Dendritic cell treated with granulocyte-macrophage colony-stimulating factor and Interleukin-4, amounts not matched to agents 40 ng/mL and 50 ng/mL, for 4 days (primary cell): ENCODE measurements at regions of chr12 and their contacts with region 1.

Region 1: GRCh38 chr12:48165094-48165981 is 8.0 kb upstream of the ASB8 start:
- H3K4me3 Mint-ChIP-seq: no peak overlapping the region
- H3K27ac Mint-ChIP-seq: no peak overlapping the region
- H3K4me1 Mint-ChIP-seq: no peaks in the 10 kb centered on the region
- H3K27me3 Mint-ChIP-seq: peaks cover 3% of the 10 kb centered on the region

Region 2: GRCh38 chr12:47963340-47964040 is 201.8 kb before region 1 on chr12 and contains the start of gene TMEM106C:
- intact Hi-C with region 1: loop called (anchors 10 kb)
- H3K4me3 Mint-ChIP-seq: peak within 1 kb of the TSS; percentile 89
- H3K27ac Mint-ChIP-seq: peak within 1 kb of the TSS; percentile 81
- H3K4me1 Mint-ChIP-seq: peaks cover 28% of the 10 kb centered on the region
- H3K27me3 Mint-ChIP-seq: peaks cover 42% of the 10 kb centered on the region

Region 3: GRCh38 chr12:48084066-48084465 is 81.3 kb before region 1 on chr12:
- intact Hi-C with region 1: loop called (anchors 2 kb)
- H3K4me3 Mint-ChIP-seq: no peak overlapping the region
- H3K27ac Mint-ChIP-seq: no peak overlapping the region
- H3K4me1 Mint-ChIP-seq: peaks cover 8% of the 10 kb centered on the region
- H3K27me3 Mint-ChIP-seq: no peaks in the 10 kb centered on the region

Region 4: DNA sequence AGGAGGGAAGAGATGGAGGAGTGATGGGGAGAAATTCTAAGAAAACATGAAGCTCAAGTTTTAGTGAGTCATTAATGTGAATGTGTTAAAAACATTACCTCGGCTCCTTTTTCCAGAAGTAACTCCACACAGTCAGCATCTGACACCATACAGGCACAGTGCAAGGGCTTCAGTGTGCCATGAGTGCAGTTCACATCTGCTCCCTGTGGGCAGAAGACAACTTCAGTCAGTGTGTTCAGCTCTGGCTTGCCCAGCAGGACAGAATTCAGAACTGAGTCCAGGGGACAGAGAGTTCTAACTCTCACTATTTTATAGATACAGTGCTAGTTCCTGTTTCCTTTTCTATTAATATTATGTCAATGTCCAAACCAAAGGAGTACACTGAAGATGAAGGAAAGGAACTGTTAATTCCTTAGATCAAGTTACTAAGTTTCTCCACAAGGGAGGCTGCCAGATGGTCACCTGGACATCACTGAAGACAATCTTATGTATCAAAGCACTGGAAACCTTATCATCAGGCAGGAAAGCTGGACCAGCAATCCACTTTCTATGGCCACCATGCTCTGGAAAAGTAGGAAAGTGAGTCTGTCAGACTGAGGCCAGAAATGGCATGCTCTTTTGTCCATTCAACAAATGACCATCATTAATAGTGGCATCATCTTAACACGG is 14.1 kb before region 1 on chr12:
- intact Hi-C with region 1: no loop called
- H3K4me3 Mint-ChIP-seq: no peak overlapping the region
- H3K27ac Mint-ChIP-seq: no peak overlapping the region
- H3K4me1 Mint-ChIP-seq: no peaks in the 10 kb centered on the region
- H3K27me3 Mint-ChIP-seq: no peaks in the 10 kb centered on the region